ENCODE measurements at regions of chr1 and their contacts with region 1.

Region 1: DNA sequence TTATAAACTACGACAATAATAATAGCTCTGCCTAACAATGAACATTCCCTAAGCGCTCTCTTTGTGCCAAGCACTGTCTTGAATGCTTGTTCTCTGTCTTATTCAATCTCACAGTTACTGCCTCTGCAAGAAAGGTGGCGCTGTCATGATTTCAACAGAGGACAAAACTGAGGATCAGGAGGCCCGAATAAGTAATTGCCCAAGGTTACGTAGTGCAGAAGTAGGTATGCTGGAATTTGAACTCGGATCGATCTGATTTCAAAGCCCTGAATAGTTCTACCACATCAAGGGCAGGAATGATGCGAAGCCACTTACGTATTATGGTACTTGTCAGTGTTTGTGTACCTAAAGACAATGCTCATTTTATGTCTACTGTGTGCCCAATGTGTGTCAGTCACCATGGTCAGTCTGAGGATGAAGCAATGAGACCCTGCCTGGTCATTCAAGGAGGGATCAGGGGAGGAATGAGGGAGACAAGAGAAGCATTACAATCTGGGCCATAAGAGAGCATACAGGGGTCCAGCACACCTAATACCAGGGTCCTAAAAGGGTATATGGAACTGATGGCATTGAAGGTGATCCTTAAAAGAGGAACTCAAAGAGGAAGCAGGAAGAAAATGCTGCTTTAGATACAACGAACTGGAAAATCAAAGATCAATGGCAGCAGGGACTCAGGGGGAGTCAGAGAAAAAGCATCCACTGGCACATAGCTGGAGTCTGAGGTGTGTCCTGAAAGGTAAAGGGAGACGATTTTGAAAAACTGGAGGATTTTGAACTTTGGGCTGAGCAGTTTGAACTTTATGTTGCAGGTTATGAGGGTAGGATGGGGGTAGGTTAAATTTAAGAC is 389.2 kb downstream of the PLPP3 start:
- DNase-seq: peak in 2 of 5 donors; percentile 20 to 38
- ATAC-seq: peak in 3 of 4 donors; percentile 57 to 86 (median 59)
- H3K4me3 ChIP-seq: no peak overlapping the region
- H3K27ac ChIP-seq: peak overlapping the region in 3 of 12 donors; percentile 19 to 40 (median 20)
- H3K4me1 ChIP-seq: peaks cover 0 to 20% (median 11%) of the 10 kb centered on the region in 12 donors
- H3K27me3 ChIP-seq: no peaks in the 10 kb centered on the region
- CTCF ChIP-seq: peak in 11 of 12 donors; percentile 25 to 67 (median 52)
- POLR2A ChIP-seq: no peak

Region 2: GRCh38 chr1:55670331-55671082 is 519.7 kb before region 1 on chr1:
- intact Hi-C with region 1: no loop called
- DNase-seq: no peak
- ATAC-seq: no peak
- H3K4me3 ChIP-seq: no peak overlapping the region
- H3K27ac ChIP-seq: peak overlapping the region in 3 of 12 donors; percentile 12 to 47 (median 29)
- H3K4me1 ChIP-seq: peaks cover 0 to 19% (median 5%) of the 10 kb centered on the region in 12 donors
- H3K27me3 ChIP-seq: no peaks in the 10 kb centered on the region
- CTCF ChIP-seq: peak in 1 of 12 donors; percentile 8
- POLR2A ChIP-seq: no peak

Region 3: DNA sequence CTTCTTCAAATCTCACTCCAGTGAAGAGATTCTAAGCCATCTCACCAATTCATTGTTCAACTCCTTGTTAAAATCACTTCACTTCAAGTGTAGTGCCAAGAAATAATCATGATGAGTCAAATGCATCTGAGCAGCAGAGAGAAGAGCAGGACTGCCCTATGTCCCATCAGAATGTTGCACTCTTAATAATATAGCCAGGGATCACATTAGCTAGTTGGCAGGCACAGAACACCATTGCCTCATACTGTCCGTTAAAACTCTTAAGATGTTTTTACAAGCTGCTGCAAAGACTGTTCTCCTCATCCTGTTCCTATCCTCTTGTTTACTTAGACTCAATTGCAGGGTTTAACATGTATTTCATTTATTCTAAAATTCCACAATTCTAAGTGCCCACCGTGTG is 43.7 kb before region 1 on chr1:
- intact Hi-C with region 1: loop called in 1 of 10 experiments (anchors 5 kb)
- DNase-seq: no peak
- ATAC-seq: peak in 3 of 4 donors; percentile 42 to 63 (median 42)
- H3K4me3 ChIP-seq: no peak overlapping the region
- H3K27ac ChIP-seq: peak overlapping the region in 2 of 12 donors; percentile 22 to 46
- H3K4me1 ChIP-seq: peaks cover 0 to 32% (median 4%) of the 10 kb centered on the region in 12 donors
- H3K27me3 ChIP-seq: no peaks in the 10 kb centered on the region
- CTCF ChIP-seq: no peak
- POLR2A ChIP-seq: no peak

Region 4: GRCh38 chr1:56291374-56291919 is 101.3 kb after region 1 on chr1:
- intact Hi-C with region 1: loop called in 4 of 10 experiments (anchors 5 to 10 kb)
- DNase-seq: peak in 4 of 5 donors; percentile 33 to 74 (median 58)
- ATAC-seq: peak; percentile 29 to 90 (median 86)
- H3K4me3 ChIP-seq: no peak overlapping the region
- H3K27ac ChIP-seq: peak overlapping the region in 9 of 12 donors; percentile 28 to 69 (median 47)
- H3K4me1 ChIP-seq: peaks cover 0 to 24% (median 5%) of the 10 kb centered on the region in 12 donors
- H3K27me3 ChIP-seq: no peaks in the 10 kb centered on the region
- CTCF ChIP-seq: no peak
- POLR2A ChIP-seq: no peak

Region 5: GRCh38 chr1:56390227-56390867 is 200.2 kb after region 1 on chr1:
- intact Hi-C with region 1: loop called in 1 of 10 experiments (anchors 10 kb)
- DNase-seq: no peak
- ATAC-seq: no peak
- H3K4me3 ChIP-seq: no peak overlapping the region
- H3K27ac ChIP-seq: peak overlapping the region in 1 of 12 donors; percentile 7
- H3K4me1 ChIP-seq: peaks cover 0 to 25% (median 0%) of the 10 kb centered on the region in 12 donors
- H3K27me3 ChIP-seq: no peaks in the 10 kb centered on the region
- CTCF ChIP-seq: no peak
- POLR2A ChIP-seq: no peak

Region 6: DNA sequence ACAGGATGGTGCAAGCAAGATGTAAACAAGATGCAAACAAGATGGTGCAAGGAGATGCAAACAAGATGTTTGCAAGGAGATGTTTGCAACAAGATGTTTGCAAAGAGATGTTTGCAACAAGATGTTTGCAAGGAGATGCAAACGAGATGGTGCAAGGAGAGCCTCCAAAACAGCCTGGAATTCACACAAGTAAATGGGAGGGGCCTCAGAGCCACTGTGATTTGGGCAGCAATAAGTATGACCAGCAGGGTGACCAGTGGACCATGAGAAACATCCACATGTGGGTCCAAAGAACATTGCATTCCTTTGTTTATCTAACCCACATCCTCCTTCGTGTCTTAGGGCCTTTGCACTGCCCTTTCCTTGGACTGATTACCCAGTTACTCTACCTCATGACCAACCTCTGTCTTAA is 226.3 kb after region 1 on chr1:
- intact Hi-C with region 1: loop called in 3 of 10 experiments (anchors 5 to 10 kb)
- DNase-seq: no peak
- ATAC-seq: no peak
- H3K4me3 ChIP-seq: no peak overlapping the region
- H3K27ac ChIP-seq: no peak overlapping the region
- H3K4me1 ChIP-seq: peaks cover 0 to 42% (median 12%) of the 10 kb centered on the region in 12 donors
- H3K27me3 ChIP-seq: no peaks in the 10 kb centered on the region
- CTCF ChIP-seq: peak in 1 of 12 donors; percentile 11
- POLR2A ChIP-seq: no peak